ENCODE measurements at regions of chrX and their contacts with region 1.

Region 1: GRCh38 chrX:57643698-57644097 is 36.4 kb downstream of the NLRP2B start:
- DNase-seq: no peak
- CTCF ChIP-seq: no peak

Region 2: GRCh38 chrX:57137501-57137900 is 506.2 kb before region 1 on chrX:
- in situ Hi-C with region 1: no loop called
- DNase-seq: no peak
- CTCF ChIP-seq: no peak

Region 3: DNA sequence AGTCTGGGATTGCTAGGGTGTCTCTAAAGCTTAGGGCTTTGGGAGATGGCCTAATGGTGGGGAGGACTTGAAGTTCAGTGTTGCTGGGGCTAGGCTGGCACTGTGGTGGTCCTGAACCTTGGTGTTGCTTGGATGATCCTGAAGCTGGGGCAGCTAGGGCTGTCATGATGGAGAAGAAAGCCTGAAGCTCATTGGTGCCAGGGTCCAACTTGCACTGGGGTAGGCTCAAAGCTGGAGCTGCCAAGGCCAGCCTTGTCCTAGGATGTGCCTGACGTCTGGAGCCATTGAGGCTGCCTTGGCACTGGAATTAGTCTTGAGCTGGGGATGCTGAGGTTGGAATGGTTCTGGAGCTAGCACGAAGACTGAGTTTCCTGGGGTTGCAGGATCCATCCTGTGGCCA is 97.4 kb after region 1 on chrX:
- in situ Hi-C with region 1: loop called (anchors 25 kb)
- DNase-seq: no peak
- CTCF ChIP-seq: no peak

Region 4: GRCh38 chrX:57772637-57773036 is 128.9 kb after region 1 on chrX:
- in situ Hi-C with region 1: no loop called
- DNase-seq: no peak
- CTCF ChIP-seq: no peak

Region 5: DNA sequence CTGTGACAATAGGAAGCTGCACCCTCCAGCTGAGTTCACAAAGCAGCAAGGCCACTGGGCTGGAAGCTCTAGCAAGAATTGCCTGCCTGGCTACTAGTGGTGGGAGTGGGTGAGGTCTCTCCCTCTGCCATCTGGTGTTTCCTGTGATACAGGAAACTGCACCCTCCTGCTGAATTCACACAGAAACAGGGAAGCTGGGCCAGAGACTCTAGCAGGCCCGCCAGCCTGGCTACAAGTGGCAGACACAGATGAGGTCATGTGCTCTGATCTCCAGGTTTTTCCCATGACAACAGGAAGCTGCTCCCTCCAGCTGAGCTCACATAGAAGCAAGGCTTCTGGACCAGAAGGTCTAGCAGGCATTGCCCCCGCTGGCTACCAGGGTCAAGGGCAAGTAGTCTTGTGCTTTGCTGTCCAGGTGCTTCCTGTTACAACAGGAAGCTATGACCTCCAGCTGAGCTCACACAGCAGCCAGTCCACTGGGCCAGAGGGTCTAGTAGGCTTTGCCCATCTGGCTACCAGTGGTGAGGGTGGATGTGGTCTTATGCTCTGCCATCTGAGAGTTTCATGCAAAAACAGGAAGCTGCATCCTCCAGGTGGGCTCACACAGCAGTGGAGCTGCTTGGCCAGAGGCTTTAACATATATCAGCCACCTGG is 308.1 kb after region 1 on chrX:
- in situ Hi-C with region 1: no loop called
- DNase-seq: no peak
- CTCF ChIP-seq: no peak